Activated CD4-positive, alpha-beta memory T cell treated with anti-CD3 and anti-CD28 coated beads for 36 hours (primary cell): ENCODE measurements at regions of chr1 and their contacts with region 1.

Region 1: GRCh38 chr1:11693024-11693590 is 1.6 kb downstream of the DRAXIN start:
- DNase-seq: peak; percentile 70
- H3K4me3 Mint-ChIP-seq: no peak overlapping the region
- H3K27ac Mint-ChIP-seq: no peak overlapping the region
- H3K4me1 Mint-ChIP-seq: peaks cover 20% of the 10 kb centered on the region
- H3K27me3 Mint-ChIP-seq: peaks cover 34% of the 10 kb centered on the region

Region 2: GRCh38 chr1:11611638-11612327 is 81.3 kb before region 1 on chr1:
- CTCF ChIA-PET with region 1: no interaction called
- POLR2A ChIA-PET with region 1: no interaction called
- intact Hi-C with region 1: no loop called
- DNase-seq: no peak
- H3K4me3 Mint-ChIP-seq: no peak overlapping the region
- H3K27ac Mint-ChIP-seq: no peak overlapping the region
- H3K4me1 Mint-ChIP-seq: no peaks in the 10 kb centered on the region
- H3K27me3 Mint-ChIP-seq: peaks cover 2% of the 10 kb centered on the region

Region 3: GRCh38 chr1:11681071-11681771 is 11.9 kb before region 1 on chr1 and contains the start of gene MAD2L2:
- CTCF ChIA-PET with region 1: interaction called, 8 read pairs
- POLR2A ChIA-PET with region 1: interaction called, 3 read pairs
- intact Hi-C with region 1: loop called (anchors 1 kb)
- DNase-seq: peak; percentile 92
- H3K4me3 Mint-ChIP-seq: peak within 1 kb of the TSS; percentile 86
- H3K27ac Mint-ChIP-seq: peak within 1 kb of the TSS; percentile 92
- H3K4me1 Mint-ChIP-seq: peaks cover 11% of the 10 kb centered on the region
- H3K27me3 Mint-ChIP-seq: peaks cover 2% of the 10 kb centered on the region
- total RNA-seq, gene MAD2L2: 88.5 to 93.2 TPM

Region 4: GRCh38 chr1:11934302-11935056 is 241.4 kb after region 1 on chr1 and contains the start of gene PLOD1:
- CTCF ChIA-PET with region 1: no interaction called
- POLR2A ChIA-PET with region 1: no interaction called
- intact Hi-C with region 1: no loop called
- DNase-seq: peak; percentile 90
- H3K4me3 Mint-ChIP-seq: peak within 1 kb of the TSS; percentile 76
- H3K27ac Mint-ChIP-seq: no peak within 1 kb of the TSS
- H3K4me1 Mint-ChIP-seq: no peaks in the 10 kb centered on the region
- H3K27me3 Mint-ChIP-seq: no peaks in the 10 kb centered on the region
- total RNA-seq, gene PLOD1: 11.0 to 13.5 TPM